ENCODE measurements at regions of chr1 and their contacts with region 1.

Region 1: GRCh38 chr1:150067184-150068036 is at the start of gene VPS45:
- DNase-seq: peak; percentile 88
- ATAC-seq: peak; percentile 96
- H3K4me3 ChIP-seq: peak within 1 kb of the TSS; percentile 63
- H3K27ac ChIP-seq: peak within 1 kb of the TSS; percentile 89
- H3K4me1 ChIP-seq: peaks cover 2% of the 10 kb centered on the region; the same call in 1 of the 2 replicates
- H3K27me3 ChIP-seq: no peaks in the 10 kb centered on the region
- CTCF ChIP-seq: no peak
- POLR2A ChIP-seq: peak; percentile 62; the same call in 1 of the 2 replicates
- RAD21 ChIP-seq: no peak; the same call in 1 of the 2 replicates
- total RNA-seq, gene VPS45: 32.4 and 41.1 TPM in 2 replicates

Region 2: DNA sequence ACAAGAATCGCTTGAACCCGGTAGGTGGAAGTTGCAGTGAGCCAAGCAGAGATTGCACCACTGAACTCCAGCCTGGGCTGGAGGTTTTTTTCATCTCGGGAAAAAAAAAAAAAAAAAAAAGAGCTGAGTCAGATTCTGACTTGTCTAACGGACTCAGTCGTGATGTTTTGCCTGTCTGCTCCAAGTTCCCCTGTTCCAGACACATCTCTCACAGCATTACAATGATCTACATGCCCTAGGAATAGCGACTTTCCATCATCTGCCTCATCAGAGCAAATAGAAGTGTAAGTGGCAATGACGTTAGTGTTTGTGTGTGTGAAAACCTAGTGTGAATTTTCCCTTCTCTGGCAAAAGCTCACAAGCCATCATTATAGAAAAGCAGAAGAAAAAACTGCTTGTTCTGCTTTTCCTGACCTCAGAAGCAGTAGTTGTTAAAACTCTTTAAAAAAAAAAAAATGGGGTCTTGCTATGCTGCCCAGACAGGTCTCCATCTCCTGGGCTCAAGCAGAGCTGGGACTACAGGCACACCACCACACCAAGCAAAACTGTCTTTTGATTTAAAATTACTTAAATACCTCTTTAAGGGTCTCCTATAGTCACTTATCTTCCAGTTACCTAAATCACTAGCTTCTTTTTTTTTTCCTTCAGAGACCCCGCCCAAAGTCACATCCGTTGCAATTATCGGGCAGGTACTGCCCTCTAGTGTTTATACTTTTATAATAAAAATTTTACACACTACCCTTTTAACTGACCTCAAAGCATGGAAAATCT is 119.6 kb after region 1 on chr1:
- CTCF ChIA-PET with region 1: interaction called, 13 read pairs
- POLR2A ChIA-PET with region 1: no interaction called
- dilution Hi-C with region 1: no loop called
- in situ Hi-C with region 1: no loop called
- intact Hi-C with region 1: no loop called
- DNase-seq: peak; percentile 56
- ATAC-seq: peak; percentile 61
- H3K4me3 ChIP-seq: no peak overlapping the region
- H3K27ac ChIP-seq: peak overlapping the region; percentile 75
- H3K4me1 ChIP-seq: peaks cover 2% of the 10 kb centered on the region; the same call in 1 of the 2 replicates
- H3K27me3 ChIP-seq: no peaks in the 10 kb centered on the region
- CTCF ChIP-seq: peak; percentile 60
- POLR2A ChIP-seq: no peak
- RAD21 ChIP-seq: peak; percentile 75